ENCODE measurements at regions of chr7 and their contacts with region 1.

Region 1: DNA sequence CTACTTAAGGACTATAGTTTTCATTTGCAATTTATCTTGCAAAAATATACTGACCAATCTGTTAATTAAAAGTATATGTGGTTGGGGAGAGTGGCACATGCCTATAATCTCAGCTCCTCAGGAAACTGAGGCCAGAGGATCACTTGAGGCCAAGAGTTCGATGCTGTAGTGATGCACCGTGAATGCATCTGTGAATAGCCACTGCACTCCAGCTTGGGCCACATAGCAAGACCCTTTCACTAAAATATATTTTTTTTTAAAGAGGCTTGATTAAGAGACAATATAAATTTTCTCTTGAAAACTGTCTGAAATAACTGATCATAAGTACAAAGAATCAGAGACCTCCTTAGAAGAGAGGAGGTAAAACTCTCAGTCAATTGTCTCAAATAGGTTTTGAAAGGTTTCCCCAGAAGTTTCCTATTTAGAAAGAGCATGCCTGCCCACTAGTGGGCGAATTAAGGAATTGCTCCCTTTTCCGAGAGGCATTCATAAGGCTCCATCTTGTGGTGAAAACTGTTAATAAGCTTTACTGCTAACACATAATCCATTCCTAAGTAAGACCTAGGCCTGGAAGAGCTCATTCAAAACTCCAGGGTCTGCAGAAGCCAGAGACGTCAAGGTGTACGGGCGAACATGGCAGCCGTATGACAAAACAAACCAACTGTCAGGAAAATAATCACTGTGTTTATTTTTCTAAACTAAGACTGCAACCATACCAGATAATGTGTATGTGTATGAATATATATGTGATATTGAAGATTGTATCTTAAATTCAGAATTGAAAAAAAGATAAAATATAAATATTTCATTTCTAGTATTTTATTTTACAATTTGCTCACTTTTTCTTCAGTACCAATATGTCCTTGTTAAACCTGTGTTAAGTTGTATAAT is 6.8 kb upstream of the TAS2R40 start:
- DNase-seq: peak in 1 of 2 donors; percentile 55
- H3K4me3 ChIP-seq: no peak overlapping the region
- CTCF ChIP-seq: peak in 2 of 3 donors; percentile 65 to 97
- POLR2A ChIP-seq: no peak

Region 2: GRCh38 chr7:143008007-143008901 is 206.8 kb before region 1 on chr7:
- intact Hi-C with region 1: loop called (anchors 5 kb)
- DNase-seq: peak; percentile 77 to 96
- H3K4me3 ChIP-seq: no peak overlapping the region
- CTCF ChIP-seq: peak in 1 of 3 donors; percentile 79
- POLR2A ChIP-seq: no peak

Region 3: GRCh38 chr7:143188994-143189393 is 26.0 kb before region 1 on chr7:
- intact Hi-C with region 1: no loop called
- DNase-seq: no peak
- H3K4me3 ChIP-seq: no peak overlapping the region
- CTCF ChIP-seq: no peak
- POLR2A ChIP-seq: no peak

Region 4: GRCh38 chr7:143434660-143435059 is 219.6 kb after region 1 on chr7:
- intact Hi-C with region 1: no loop called
- DNase-seq: peak; percentile 92 to 96
- H3K4me3 ChIP-seq: no peak overlapping the region
- CTCF ChIP-seq: no peak
- POLR2A ChIP-seq: no peak

Measured in lower leg skin (tissue), 4 donors.